ENCODE measurements at regions of chr6 and their contacts with region 1.

Region 1: GRCh38 chr6:35874730-35875129 is 46.2 kb downstream of the SRPK1 start:
- DNase-seq: no peak
- ATAC-seq: no peak
- H3K4me3 ChIP-seq: no peak overlapping the region
- H3K27ac ChIP-seq: no peak overlapping the region
- H3K4me1 ChIP-seq: no peaks in the 10 kb centered on the region
- H3K27me3 ChIP-seq: no peaks in the 10 kb centered on the region
- CTCF ChIP-seq: no peak

Region 2: GRCh38 chr6:35601331-35602132 is 273.2 kb before region 1 on chr6:
- intact Hi-C with region 1: no loop called
- DNase-seq: peak; percentile 46 to 73
- ATAC-seq: peak; percentile 63 to 82 (median 76)
- H3K4me3 ChIP-seq: peak overlapping the region; percentile 53
- H3K27ac ChIP-seq: peak overlapping the region; percentile 95
- H3K4me1 ChIP-seq: peaks cover 84% of the 10 kb centered on the region
- H3K27me3 ChIP-seq: no peaks in the 10 kb centered on the region
- CTCF ChIP-seq: no peak

Region 3: DNA sequence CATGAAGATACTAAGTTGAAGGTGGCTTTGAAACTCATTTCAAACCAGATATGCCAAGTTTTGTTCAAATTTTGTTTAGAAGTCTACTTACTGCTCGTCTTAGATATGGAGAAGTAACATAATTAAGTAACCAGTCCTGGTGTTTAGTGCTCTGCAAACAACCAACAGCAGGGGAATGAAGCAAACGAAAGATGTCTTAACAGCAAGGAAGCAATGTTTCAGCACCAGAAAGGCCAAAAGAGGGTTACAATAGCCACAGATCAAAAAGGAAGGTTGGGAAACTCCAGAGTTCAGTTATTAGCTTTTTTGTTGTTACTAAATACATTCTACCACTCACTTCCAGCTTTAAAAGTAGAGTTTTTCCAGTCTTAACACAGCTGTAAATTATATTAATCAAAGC is 24.5 kb before region 1 on chr6:
- intact Hi-C with region 1: loop called in 1 of 2 experiments (anchors 2 kb)
- DNase-seq: no peak
- ATAC-seq: no peak
- H3K4me3 ChIP-seq: no peak overlapping the region
- H3K27ac ChIP-seq: no peak overlapping the region
- H3K4me1 ChIP-seq: no peaks in the 10 kb centered on the region
- H3K27me3 ChIP-seq: no peaks in the 10 kb centered on the region
- CTCF ChIP-seq: no peak